ENCODE measurements at regions of chr22 and their contacts with region 1.

Region 1: GRCh38 chr22:46006379-46007002 is 29.5 kb upstream of the WNT7B start:
- DNase-seq: peak; percentile 92
- CTCF ChIP-seq: peak; percentile 95

Region 2: DNA sequence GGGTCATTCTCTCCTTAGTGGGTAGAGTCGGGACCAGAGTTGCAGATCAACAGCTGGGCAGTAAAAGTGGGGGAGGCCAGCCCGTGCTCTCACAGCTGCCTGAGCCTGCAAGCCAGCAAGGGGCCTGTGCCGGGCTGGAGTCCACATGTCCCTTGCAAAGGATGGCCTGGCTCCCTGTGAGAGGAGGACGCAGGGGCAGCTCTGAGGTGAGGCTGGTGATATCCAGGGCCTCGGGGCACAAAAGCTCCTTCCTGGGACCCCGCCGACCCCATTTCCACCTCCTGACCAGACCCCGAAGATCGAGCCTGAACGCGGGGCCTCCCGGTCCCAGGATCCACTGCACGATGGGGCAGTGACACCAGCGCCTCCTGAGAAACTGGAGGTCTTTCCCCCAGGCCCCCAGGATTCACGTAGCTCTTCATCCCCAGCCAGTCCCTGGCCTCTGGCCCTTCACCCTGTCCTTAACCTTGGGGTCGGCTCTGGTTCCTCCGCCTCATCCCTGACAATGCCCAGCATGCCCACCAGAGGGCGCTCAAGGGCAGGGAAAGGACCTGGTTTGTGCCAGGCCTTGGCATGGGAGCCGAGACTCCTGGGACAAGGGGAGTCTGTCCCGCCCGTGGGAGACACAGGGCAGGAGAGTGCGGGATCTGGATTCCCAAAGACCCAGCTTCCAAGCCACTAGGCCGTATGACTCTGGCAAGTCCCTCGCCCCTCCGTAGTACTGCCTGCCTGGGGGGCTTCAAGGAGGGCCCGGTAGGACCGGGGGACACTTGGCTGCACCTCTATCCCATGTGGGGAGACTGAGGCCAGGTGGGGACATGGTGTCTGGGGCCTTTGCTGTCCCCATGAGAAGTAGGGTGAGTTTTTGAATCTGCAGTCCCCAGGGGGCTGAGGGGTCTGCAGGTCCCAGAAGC is 11.7 kb before region 1 on chr22:
- CTCF ChIA-PET with region 1: interaction called, 68 read pairs
- POLR2A ChIA-PET with region 1: no interaction called
- DNase-seq: peak; percentile 83
- CTCF ChIP-seq: peak; percentile 96

Region 3: DNA sequence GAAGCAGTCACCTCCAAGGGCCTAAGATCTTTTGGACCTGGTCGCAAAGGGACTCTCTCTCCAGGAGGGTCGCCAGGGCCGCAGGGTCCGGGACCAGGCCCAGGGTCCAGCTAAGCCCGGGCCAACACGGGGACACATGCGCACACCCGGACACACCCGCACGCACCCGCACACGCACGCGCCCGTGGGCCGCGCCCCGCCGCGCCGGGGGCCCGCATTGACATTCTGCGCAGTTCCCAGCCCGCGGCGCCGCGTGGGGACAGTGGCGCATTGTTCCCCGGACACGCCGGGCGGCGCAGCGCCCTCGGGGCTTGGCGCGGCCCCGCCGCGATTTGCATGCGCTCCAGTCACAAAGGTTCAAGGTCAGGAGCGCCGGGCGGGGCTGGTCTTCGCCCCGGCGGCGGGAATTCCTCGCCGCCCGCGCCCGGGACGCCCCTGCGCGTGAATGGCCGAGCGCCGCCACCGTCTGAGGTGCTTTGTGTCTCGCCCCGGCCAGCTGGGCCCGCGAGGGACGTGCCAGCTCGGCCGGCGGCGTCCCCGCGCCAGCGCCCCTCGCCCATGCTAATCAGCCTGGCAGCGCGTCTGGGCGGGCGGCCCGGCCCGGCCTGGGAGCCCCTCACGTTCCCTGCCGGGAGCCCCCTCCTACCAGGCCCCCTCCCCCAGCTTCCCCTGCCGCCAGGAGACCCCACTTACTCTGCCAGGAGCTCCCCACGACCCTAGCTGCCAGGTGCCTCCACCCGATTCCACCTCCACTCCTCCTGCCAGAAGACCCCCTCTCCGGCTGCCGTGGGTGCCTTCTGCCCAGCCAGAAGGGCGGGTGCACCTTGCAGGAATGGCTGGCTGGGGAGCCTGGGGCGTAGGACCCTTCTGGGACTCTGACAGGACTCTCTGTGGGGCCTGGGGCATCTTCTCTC is 21.0 kb after region 1 on chr22:
- CTCF ChIA-PET with region 1: interaction called, 87 read pairs
- POLR2A ChIA-PET with region 1: no interaction called
- DNase-seq: no peak
- CTCF ChIP-seq: no peak

Region 4: GRCh38 chr22:46071451-46072109 is 65.1 kb after region 1 on chr22:
- CTCF ChIA-PET with region 1: interaction called, 12 read pairs
- POLR2A ChIA-PET with region 1: no interaction called
- DNase-seq: no peak
- CTCF ChIP-seq: no peak

Region 5: DNA sequence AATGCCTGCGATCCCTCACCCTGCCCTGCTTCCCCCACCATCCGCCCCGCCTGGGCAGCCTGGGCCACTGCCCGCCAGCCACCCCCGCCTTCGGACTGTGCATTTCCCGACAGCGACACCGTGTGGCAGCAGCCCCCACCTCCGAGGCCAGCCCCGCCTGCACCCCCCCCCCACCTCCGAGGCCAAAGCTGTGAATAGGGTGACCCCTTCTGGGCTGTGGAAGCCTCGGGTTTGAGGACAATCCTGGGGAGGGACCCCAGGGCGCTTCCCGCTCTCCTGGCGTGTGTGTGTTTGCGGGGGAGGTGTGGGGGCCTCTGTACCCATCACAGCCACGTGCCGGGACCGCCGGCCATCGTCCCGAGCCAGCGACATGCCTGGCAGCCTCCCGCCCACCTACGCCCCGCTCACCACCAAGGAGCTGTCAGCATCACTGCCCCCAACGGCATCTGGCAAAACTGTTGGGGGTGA is 110.0 kb after region 1 on chr22:
- CTCF ChIA-PET with region 1: interaction called, 254 read pairs
- POLR2A ChIA-PET with region 1: no interaction called
- DNase-seq: peak; percentile 96
- CTCF ChIP-seq: peak; percentile 71

Region 6: DNA sequence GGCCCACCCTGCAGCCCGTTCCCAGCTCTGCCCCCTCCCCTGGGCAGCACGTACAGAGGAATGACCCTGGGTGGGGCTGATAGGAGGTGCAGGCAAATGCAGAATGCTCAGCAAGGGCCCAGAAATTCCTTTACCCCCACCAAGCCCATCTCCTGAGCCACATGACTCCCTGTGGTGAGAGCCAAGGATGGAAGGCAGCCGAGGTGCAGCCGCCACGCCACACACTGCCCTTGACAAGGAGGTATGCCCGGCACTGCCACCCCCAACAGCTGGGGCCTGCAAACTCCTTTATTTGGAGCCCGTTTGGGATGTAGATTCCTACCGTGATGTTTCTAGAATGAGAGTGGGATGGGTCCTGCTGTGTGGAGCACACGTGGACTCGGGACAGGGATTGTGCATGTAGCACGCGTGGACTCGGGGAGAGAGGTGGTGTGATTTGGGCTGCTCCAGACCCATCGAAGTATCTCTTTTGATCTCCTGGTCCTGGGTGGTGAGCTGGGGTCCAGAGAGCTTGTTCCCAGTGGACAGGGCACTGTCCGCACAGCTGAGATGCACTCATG is 303.1 kb after region 1 on chr22:
- CTCF ChIA-PET with region 1: interaction called, 16 read pairs
- POLR2A ChIA-PET with region 1: no interaction called
- DNase-seq: no peak
- CTCF ChIP-seq: no peak

Measured in GM10248 (cell line).